ENCODE measurements at regions of chr2 and their contacts with region 1.

Region 1: DNA sequence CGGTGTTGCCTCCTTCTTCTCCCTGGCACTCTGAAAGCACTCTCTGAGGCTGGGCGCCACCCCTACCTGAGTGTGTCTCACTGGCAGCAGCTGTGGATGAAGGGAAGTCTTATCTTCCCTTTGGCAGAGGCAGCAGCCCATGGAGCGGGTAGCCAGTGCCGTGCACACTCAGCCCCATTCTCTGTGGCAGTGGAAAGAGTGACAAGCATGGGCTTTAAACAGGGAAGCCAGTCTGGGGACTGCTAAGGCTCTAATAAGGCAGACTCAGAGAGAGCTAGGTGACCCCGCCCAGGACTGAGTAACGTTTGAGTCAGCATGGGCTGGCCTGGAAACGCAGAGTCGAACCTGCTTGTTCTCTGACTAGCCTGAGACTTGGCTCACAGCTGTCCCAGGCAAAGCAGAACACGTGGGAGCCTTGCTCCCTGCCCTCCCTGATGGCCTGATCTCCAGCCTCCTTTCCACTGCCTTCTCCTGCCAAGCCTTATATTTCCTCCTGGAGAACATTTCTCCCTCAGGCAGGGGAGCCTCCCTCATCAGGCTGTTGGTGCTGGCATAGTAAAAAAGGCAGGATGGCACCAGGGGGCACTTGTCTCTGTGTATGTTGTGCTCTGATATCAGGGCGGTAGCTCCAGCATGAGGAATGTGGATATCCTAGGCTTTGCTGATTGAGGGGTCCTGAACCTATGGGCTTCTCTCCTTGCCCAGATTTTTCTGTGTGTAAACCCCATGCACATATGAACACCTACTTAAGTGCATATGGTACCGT is 93.9 kb upstream of the LGALSL start:
- DNase-seq: peak; percentile 15
- H3K4me3 Mint-ChIP-seq: no peak overlapping the region
- H3K27ac Mint-ChIP-seq: no peak overlapping the region
- H3K4me1 Mint-ChIP-seq: peaks cover 9% of the 10 kb centered on the region
- H3K27me3 Mint-ChIP-seq: peaks cover 34% of the 10 kb centered on the region

Region 2: GRCh38 chr2:64453770-64454385 is 93.8 kb after region 1 on chr2 and contains the start of gene LGALSL:
- intact Hi-C with region 1: loop called (anchors 10 kb)
- DNase-seq: peak; percentile 30
- H3K4me3 Mint-ChIP-seq: peak within 1 kb of the TSS; percentile 78
- H3K27ac Mint-ChIP-seq: no peak within 1 kb of the TSS
- H3K4me1 Mint-ChIP-seq: peaks cover 5% of the 10 kb centered on the region
- H3K27me3 Mint-ChIP-seq: peaks cover 49% of the 10 kb centered on the region
- total RNA-seq, gene LGALSL: 2.6 and 3.3 TPM in 2 replicates

Region 3: GRCh38 chr2:64675860-64676259 is 315.8 kb after region 1 on chr2:
- intact Hi-C with region 1: no loop called
- DNase-seq: no peak
- H3K4me3 Mint-ChIP-seq: no peak overlapping the region
- H3K27ac Mint-ChIP-seq: peak overlapping the region; percentile 39
- H3K4me1 Mint-ChIP-seq: peaks cover 57% of the 10 kb centered on the region
- H3K27me3 Mint-ChIP-seq: no peaks in the 10 kb centered on the region